ENCODE measurements at regions of chr5 and their contacts with region 1.

Region 1: GRCh38 chr5:152379331-152379730 is 25.7 kb downstream of the NMUR2 start:
- DNase-seq: no peak

Region 2: GRCh38 chr5:152505442-152506042 is 126.2 kb after region 1 on chr5:
- intact Hi-C with region 1: loop called (anchors 1 kb)
- DNase-seq: peak in 6 of 10 donors; percentile 25 to 79 (median 69)